ENCODE measurements at regions of chr5 and their contacts with region 1.

Region 1: GRCh38 chr5:156920042-156920860 is 42.8 kb downstream of the TIMD4 start:
- DNase-seq: peak; percentile 80
- H3K4me3 Mint-ChIP-seq: peak overlapping the region; percentile 89
- H3K27ac Mint-ChIP-seq: peak overlapping the region; percentile 99
- H3K4me1 Mint-ChIP-seq: peaks cover 80% of the 10 kb centered on the region
- H3K27me3 Mint-ChIP-seq: no peaks in the 10 kb centered on the region

Region 2: DNA sequence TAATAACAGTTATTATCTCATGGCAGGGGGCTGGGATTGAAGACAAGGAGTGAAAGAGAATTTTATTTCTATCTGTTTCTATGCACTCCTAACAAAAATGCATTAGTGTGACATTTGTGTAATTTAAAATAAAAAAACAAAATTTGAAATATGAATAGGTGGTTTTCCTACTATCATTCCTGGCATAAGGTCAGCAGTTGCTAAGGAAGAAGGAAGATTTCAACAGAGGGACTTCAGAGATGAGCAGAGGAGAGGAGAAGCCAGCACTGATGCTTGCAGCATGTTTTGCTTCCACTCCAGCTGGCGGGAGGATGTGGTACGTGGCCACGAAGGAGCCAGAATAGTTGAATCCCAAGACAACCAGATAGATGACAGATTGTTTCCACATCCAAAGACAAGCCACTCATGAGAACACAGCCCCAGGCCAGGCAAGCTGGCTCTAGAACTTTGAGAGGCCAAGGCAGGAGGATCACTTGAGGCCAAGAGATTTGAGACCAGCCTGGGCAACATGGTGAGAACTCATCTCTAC is 27.6 kb after region 1 on chr5:
- intact Hi-C with region 1: loop called (anchors 1 kb)
- DNase-seq: peak; percentile 46
- H3K4me3 Mint-ChIP-seq: peak overlapping the region; percentile 59
- H3K27ac Mint-ChIP-seq: peak overlapping the region; percentile 87
- H3K4me1 Mint-ChIP-seq: peaks cover 53% of the 10 kb centered on the region
- H3K27me3 Mint-ChIP-seq: no peaks in the 10 kb centered on the region

Region 3: DNA sequence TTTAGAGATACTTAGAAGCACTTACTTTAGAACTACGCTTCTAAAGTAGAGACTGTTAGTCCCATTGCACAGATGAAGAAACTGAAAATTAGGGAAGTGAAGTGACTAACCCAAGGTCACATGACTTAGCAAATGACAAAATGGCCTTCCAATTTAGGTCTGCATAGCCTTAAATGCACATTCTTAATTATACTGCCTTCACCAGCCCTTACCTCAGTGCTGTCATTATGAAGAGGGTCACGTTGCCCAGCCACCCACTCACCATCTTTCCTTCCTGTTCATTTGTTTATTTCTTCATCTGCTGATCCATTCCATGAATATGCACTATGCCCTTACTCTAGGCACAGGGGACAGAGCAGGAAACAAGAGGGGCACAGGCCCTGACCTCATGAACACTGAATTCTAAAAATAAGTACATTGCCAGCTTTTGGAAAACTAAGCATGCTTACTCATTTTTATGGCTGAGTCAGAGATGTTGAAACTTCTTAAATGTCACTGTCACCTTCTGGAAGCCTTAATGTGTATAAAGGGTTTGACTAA is 180.0 kb after region 1 on chr5:
- intact Hi-C with region 1: loop called (anchors 1 kb)
- DNase-seq: no peak
- H3K4me3 Mint-ChIP-seq: peak overlapping the region; percentile 54
- H3K27ac Mint-ChIP-seq: peak overlapping the region; percentile 95
- H3K4me1 Mint-ChIP-seq: peaks cover 50% of the 10 kb centered on the region
- H3K27me3 Mint-ChIP-seq: no peaks in the 10 kb centered on the region

Region 4: GRCh38 chr5:157172403-157172802 is 252.2 kb after region 1 on chr5:
- intact Hi-C with region 1: loop called (anchors 1 kb)
- DNase-seq: peak; percentile 84
- H3K4me3 Mint-ChIP-seq: peak overlapping the region; percentile 68
- H3K27ac Mint-ChIP-seq: peak overlapping the region; percentile 91
- H3K4me1 Mint-ChIP-seq: peaks cover 78% of the 10 kb centered on the region
- H3K27me3 Mint-ChIP-seq: no peaks in the 10 kb centered on the region

Region 5: DNA sequence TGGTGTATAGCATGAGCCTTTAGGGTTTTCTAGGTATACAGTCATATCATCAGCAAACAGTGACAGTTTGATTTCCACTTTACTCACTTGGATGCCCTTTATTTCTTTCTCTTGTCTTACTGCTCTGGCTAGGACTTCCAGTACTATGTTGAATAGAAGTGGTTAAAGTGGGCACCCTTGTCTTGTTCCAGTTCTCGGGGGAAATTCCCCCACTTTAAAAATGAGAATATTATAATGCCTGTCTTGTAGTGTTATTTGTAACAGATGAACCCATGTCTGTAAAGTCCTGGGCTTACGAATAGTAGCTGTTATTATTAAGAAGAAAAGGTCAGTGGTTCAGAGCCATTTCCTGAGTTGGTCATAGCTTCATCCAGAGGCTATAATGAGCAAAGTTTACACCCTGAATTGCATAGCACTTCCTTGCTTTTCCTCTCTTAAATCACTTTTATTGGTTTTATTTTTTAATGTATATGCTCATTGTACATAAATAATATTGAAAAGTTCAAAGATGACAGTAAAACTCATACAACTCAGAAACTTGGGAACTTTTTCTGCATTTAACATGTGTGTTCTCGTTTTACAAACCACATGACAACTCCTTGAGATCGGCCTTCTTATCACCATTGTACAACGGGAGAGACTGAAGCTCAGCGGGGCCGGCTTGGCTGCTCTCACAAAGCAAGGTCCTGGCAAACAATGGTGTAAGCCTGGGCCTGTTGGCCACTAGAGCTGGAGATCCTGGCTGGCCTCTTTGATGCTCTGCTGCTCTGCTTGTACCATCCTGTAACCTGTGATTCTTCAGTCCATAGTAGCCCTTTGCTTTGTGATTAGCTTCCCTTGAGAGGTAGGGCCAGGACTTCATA is 430.9 kb after region 1 on chr5:
- intact Hi-C with region 1: loop called (anchors 2 kb)
- DNase-seq: no peak
- H3K4me3 Mint-ChIP-seq: peak overlapping the region; percentile 25
- H3K27ac Mint-ChIP-seq: peak overlapping the region; percentile 89
- H3K4me1 Mint-ChIP-seq: peaks cover 55% of the 10 kb centered on the region
- H3K27me3 Mint-ChIP-seq: no peaks in the 10 kb centered on the region

Measured in activated T-helper 1 cell treated with anti-CD3 and anti-CD28 coated beads, Interleukin-12 subunit alpha, Interleukin-12 subunit beta, Interleukin-2, Interleukin-4 antibody, amounts not matched to agents 30 ng/mL and 10 ng/mL and 1 ng/mL, durations not matched to agents 14 hours and 24 hours and 36 hours (primary cell).